HAP-1 (cell line): ENCODE measurements at regions of chr6 and their contacts with region 1.

Region 1: GRCh38 chr6:148464319-148465010 is 121.8 kb downstream of the SASH1 start:
- DNase-seq: peak; percentile 70 to 78
- H3K4me3 ChIP-seq: no peak overlapping the region
- H3K4me1 ChIP-seq: no peaks in the 10 kb centered on the region
- H3K27me3 ChIP-seq: no peaks in the 10 kb centered on the region

Region 2: DNA sequence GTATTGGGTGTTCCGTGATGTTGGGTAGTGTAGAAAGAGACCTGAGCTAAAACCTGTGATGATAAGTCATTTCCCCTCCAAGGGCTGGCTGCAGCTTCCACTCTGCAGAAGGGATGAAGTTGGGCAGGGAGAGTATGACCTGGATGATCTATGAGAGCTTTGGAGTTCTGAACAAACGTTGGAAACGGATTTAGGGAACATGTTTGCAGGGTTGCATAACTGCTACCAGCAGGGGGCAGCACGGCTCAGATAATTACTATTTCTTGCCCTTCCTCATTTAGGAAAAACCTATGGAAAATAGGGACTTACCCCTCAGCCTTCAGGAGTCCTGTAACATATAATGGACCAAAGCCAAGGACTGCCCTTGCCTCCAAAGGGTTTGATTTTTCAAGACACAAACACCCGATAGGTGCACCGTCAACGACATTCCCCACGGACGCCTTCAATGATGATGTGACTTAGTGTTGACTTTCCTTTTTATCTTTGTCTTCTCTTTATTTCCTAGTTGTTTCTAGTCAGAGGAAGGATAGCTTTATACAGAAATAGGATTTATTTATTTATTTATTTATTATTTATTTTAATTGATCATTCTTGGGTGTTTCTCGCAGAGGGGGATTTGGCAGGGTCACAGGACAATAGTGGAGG is 286.8 kb before region 1 on chr6:
- in situ Hi-C with region 1: loop called (anchors 25 kb)
- DNase-seq: peak; percentile 12 to 78
- H3K4me3 ChIP-seq: no peak overlapping the region
- H3K4me1 ChIP-seq: no peaks in the 10 kb centered on the region
- H3K27me3 ChIP-seq: no peaks in the 10 kb centered on the region

Region 3: DNA sequence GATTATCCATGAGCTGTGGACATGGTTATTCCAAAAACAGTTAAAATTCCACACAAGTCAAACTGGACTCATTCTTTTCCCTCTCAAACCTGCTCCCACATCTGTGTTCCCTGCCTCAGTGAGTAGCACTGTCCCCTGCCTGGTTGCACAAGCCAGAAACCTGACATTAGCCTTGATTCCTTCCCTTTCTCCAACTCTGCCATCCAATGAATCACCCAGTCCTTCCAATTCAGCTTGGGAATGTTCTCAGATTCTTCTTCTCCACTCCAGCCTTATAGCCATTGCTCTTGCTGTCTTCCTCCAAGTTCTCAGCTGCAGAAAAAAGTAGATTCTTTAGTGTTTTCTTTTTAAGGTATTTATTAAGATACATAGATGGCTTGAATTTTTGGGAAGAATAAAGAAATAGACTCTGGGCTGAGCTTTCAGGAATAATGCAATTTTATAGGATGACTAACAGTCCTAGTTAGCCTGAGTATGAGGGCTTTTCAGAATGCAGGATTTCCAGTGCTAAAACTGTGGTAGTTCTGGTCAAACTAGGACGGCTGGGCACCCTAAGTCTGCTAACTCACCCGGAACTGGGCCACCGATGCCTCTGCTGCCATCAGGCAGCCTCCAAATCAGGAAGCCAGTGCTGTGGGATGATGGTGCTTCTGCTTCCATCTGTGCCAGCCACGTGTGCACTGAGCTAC is 140.0 kb before region 1 on chr6:
- in situ Hi-C with region 1: no loop called
- DNase-seq: no peak
- H3K4me3 ChIP-seq: no peak overlapping the region
- H3K4me1 ChIP-seq: no peaks in the 10 kb centered on the region
- H3K27me3 ChIP-seq: no peaks in the 10 kb centered on the region